Sciatic nerve (tissue), 2 donors: ENCODE measurements at regions of chrX and their contacts with region 1.

Region 1: DNA sequence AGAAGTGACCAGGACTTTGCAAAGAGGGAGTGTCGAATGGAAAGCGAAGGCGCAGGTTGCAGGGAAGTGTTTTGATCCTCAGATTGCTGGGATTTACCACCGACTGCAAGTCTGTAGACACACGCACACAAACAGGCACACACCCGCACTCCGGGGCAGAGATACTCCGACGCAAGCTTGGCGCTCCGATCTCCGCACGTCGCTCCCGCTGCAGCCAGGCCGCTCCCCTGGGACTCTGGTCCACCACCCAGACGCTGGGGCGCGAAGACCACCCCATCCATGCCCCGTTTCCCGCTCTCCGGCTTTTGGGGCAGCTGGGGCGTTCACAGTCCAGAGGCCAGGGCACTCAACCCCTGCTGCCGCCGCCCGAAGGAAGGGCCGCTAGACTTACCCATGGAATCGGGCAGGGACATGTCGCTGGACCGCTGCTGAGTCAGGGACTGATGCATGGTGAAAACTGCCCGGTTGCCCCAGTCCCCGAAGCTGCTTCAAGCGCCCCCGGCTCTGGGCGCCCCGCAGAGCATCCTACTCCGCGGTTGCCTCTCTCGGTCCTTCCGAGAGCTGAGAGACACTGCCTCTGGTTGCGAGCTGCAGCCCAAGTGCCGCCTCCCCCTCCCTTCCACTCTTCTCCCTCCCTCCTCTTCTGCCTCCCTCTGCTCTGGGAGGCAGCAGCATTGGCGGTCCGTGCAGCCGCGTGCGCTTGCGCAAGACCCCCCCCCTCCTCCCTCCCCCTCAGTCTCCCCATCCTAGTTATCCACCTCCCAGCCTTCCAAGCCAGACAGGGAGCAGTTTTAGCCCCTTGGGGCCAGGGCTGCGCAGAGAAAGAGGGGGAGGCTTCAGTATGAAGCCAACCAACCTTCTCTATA is at the start of gene TMEM255A:
- DNase-seq: peak; percentile 55
- ATAC-seq: peak; percentile 68
- total RNA-seq, gene TMEM255A: 16.4 TPM

Region 2: GRCh38 chrX:119791438-119792231 is 519.5 kb before region 1 on chrX and contains the start of gene RPL39:
- intact Hi-C with region 1: no loop called
- DNase-seq: peak; percentile 89
- ATAC-seq: peak; percentile 98
- total RNA-seq, gene RPL39: 1,230 TPM

Region 3: GRCh38 chrX:121106484-121107235 is 795.6 kb after region 1 on chrX:
- intact Hi-C with region 1: loop called (anchors 5 kb)
- DNase-seq: no peak
- ATAC-seq: no peak